Activated CD4-positive, alpha-beta T cell treated with anti-CD3 and anti-CD28 coated beads for 36 hours (primary cell): ENCODE measurements at regions of chr2 and their contacts with region 1.

Region 1: DNA sequence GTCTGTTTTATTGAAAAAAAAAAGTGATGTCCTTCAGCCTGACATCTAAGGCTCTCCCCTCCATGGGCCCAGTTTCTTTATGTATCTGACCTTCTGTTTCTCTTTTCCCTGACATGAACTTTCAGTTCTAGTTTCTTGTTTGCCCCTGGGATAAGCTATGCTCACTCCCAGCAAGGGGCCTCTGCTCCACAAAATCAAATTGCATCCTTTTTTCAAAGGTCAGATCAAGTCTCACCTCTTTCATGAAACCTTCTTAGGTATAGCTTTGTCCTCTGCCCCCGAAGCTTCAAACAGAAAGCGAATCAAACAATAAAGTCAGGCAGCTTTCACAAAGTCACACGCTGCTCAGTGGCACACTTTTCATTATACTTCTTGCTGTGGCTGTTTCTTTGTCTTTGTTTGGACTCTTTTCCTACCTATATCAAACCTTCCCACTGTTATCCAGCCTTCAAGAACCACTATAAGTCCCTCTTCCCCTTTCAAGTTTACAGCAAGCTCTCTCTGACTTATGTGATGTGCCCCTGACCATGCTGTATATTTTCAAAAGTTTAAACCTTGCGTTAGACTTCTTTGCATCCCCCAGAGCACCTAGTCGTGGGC is 23.3 kb downstream of the MAP3K19 start:
- DNase-seq: no peak
- ATAC-seq: no peak
- H3K4me3 Mint-ChIP-seq: no peak overlapping the region
- H3K27ac Mint-ChIP-seq: peak overlapping the region; percentile 39
- H3K4me1 Mint-ChIP-seq: peaks cover 20% of the 10 kb centered on the region
- H3K27me3 Mint-ChIP-seq: no peaks in the 10 kb centered on the region

Region 2: GRCh38 chr2:133755480-133756300 is 1268.3 kb before region 1 on chr2:
- CTCF ChIA-PET with region 1: no interaction called
- POLR2A ChIA-PET with region 1: no interaction called
- intact Hi-C with region 1: no loop called
- DNase-seq: no peak
- ATAC-seq: no peak
- H3K4me3 Mint-ChIP-seq: no peak overlapping the region
- H3K27ac Mint-ChIP-seq: no peak overlapping the region
- H3K4me1 Mint-ChIP-seq: no peaks in the 10 kb centered on the region
- H3K27me3 Mint-ChIP-seq: peaks cover 9% of the 10 kb centered on the region

Region 3: GRCh38 chr2:134973241-134974138 is 50.5 kb before region 1 on chr2:
- CTCF ChIA-PET with region 1: no interaction called
- POLR2A ChIA-PET with region 1: no interaction called
- intact Hi-C with region 1: loop called in 1 of 2 experiments (anchors 1 kb)
- DNase-seq: no peak
- ATAC-seq: peak; percentile 81
- H3K4me3 Mint-ChIP-seq: peak overlapping the region; percentile 12
- H3K27ac Mint-ChIP-seq: peak overlapping the region; percentile 24
- H3K4me1 Mint-ChIP-seq: peaks cover 15% of the 10 kb centered on the region
- H3K27me3 Mint-ChIP-seq: no peaks in the 10 kb centered on the region